ENCODE measurements at regions of chr5 and their contacts with region 1.

Region 1: DNA sequence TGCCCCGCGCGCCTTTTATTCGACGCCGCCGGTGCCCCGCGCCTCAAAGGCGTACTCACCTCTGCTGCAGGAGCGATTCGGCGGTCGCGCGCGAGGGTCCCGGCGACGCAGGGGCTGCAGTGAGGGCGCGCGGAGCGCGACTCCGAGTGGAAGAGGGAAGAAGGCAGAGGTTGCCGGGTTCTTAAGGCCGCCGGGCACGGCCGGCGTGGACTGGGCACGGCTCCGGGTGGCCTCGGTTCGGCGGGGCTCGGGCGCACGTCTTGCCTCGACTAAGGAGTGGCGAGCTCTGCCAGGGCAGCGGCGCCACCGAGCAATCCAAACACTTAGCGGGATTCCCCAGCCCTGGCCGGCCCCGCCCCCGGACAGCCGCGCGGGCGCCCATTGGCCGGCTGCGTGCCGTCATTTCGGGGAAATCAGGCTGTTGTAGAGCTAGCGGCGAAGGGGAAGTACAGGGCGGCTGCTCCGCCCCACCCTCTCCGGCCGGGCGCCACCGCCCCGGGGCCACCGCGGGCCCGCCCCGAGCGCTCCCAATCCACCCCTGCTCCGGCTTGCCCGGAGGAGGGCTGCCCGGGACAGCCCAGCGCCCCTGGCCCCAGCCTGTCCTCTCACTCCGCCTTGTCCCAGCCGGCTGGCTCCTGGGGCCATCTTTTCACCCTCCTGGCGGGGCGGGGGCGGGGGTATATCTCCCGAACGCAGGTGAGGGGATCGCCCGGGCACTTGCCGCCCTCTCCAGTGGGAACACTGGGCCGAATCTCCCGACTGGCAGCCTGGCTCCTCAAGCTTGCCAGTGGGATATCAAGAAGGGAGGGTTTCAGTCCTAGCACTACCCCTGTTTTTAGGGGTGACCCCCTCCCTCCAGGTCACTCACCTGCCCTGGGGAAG is at the start of gene IRF1:
- DNase-seq: peak; percentile 97 to 99 (median 98)
- ATAC-seq: peak; percentile 78 to 80
- H3K4me3 Mint-ChIP-seq: peak within 1 kb of the TSS; percentile 93 to 97 (median 96)
- H3K27ac Mint-ChIP-seq: peak within 1 kb of the TSS; percentile 96 to 98 (median 98)
- H3K4me1 Mint-ChIP-seq: peaks cover 46 to 79% (median 76%) of the 10 kb centered on the region in 4 donors
- H3K27me3 Mint-ChIP-seq: no peaks in the 10 kb centered on the region
- polyA plus RNA-seq, gene IRF1: 108 to 218 (median 141) TPM

Region 2: DNA sequence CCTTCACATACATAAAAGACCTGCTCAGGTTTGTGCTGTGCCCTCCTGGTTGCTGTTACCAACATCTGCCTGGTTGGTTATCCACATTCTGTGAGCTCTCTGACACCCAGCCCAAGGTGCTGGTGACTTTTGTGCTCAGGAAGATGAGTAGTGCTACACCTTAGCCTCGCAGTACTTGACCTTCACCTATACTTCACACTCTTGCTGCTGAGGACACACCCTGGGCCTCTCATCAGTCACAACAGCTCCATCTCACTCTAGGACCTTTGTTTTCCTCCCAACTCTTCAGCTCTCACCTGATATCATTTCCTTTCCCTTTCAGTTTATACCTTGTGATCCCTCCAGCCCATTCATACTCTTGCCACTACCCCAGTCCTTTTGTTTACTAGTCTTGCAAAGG is 132.0 kb before region 1 on chr5:
- POLR2A ChIA-PET with region 1: no interaction called
- DNase-seq: no peak
- ATAC-seq: no peak
- H3K4me3 Mint-ChIP-seq: no peak overlapping the region
- H3K27ac Mint-ChIP-seq: no peak overlapping the region
- H3K4me1 Mint-ChIP-seq: peaks cover 0 to 11% (median 5%) of the 10 kb centered on the region in 4 donors
- H3K27me3 Mint-ChIP-seq: no peaks in the 10 kb centered on the region

Region 3: GRCh38 chr5:132386644-132387286 is 104.0 kb before region 1 on chr5:
- POLR2A ChIA-PET with region 1: interaction called, 96 read pairs
- DNase-seq: peak; percentile 56 to 86 (median 74)
- ATAC-seq: peak; percentile 88 to 92
- H3K4me3 Mint-ChIP-seq: no peak overlapping the region
- H3K27ac Mint-ChIP-seq: peak overlapping the region in 6 of 10 donors; percentile 5 to 81 (median 69)
- H3K4me1 Mint-ChIP-seq: peaks cover 13 to 43% (median 21%) of the 10 kb centered on the region in 4 donors
- H3K27me3 Mint-ChIP-seq: no peaks in the 10 kb centered on the region

Region 4: GRCh38 chr5:132410451-132411381 is 80.0 kb before region 1 on chr5:
- POLR2A ChIA-PET with region 1: interaction called, 178 read pairs
- DNase-seq: peak; percentile 72 to 90 (median 83)
- ATAC-seq: peak; percentile 78 to 79
- H3K4me3 Mint-ChIP-seq: peak overlapping the region; percentile 88 to 99 (median 98)
- H3K27ac Mint-ChIP-seq: peak overlapping the region; percentile 95 to 99 (median 98)
- H3K4me1 Mint-ChIP-seq: peaks cover 36 to 91% (median 79%) of the 10 kb centered on the region in 4 donors
- H3K27me3 Mint-ChIP-seq: no peaks in the 10 kb centered on the region

Region 5: DNA sequence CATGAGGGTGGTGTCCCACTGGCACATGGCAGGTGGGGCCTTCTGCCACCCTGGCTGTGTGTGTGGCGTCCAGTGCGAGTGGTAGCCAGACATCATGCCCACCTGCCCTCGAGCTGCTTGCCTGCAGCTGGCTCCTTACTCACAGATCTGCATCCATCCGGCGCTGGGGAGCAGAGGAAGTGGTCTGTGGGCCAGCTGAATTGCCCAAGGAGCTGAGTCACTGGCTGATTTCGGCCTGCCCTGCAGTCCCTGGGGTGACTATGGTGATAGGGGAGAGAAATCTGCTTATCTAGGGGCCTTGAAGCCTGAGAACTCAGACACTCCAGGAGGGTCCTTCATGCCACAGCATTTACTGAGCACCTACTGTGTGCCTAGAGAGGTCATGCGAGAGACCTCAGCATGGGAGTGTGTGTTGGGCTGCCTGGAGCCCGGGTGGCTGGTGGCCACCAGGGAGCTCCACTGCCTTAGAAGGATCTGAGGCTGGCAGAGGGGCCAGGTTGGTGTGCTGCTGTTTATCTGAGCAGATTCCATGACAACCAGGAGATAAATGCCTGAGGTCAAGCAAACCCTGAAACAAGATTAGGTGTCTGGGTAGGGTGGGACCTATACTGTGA is 64.1 kb before region 1 on chr5:
- POLR2A ChIA-PET with region 1: interaction called, 142 read pairs
- DNase-seq: peak in 5 of 10 donors; percentile 31 to 59 (median 36)
- ATAC-seq: peak; percentile 31 to 40
- H3K4me3 Mint-ChIP-seq: peak overlapping the region; percentile 62 to 90 (median 84)
- H3K27ac Mint-ChIP-seq: peak overlapping the region; percentile 95 to 100 (median 98)
- H3K4me1 Mint-ChIP-seq: peaks cover 51 to 100% (median 98%) of the 10 kb centered on the region in 4 donors
- H3K27me3 Mint-ChIP-seq: no peaks in the 10 kb centered on the region

Region 6: GRCh38 chr5:132437604-132438266 is 53.0 kb before region 1 on chr5:
- POLR2A ChIA-PET with region 1: interaction called, 47 read pairs
- DNase-seq: peak; percentile 29 to 82 (median 52)
- ATAC-seq: peak; percentile 90 to 93
- H3K4me3 Mint-ChIP-seq: peak overlapping the region; percentile 38 to 77 (median 68)
- H3K27ac Mint-ChIP-seq: peak overlapping the region; percentile 84 to 94 (median 90)
- H3K4me1 Mint-ChIP-seq: peaks cover 47 to 95% (median 87%) of the 10 kb centered on the region in 4 donors
- H3K27me3 Mint-ChIP-seq: no peaks in the 10 kb centered on the region

Region 7: DNA sequence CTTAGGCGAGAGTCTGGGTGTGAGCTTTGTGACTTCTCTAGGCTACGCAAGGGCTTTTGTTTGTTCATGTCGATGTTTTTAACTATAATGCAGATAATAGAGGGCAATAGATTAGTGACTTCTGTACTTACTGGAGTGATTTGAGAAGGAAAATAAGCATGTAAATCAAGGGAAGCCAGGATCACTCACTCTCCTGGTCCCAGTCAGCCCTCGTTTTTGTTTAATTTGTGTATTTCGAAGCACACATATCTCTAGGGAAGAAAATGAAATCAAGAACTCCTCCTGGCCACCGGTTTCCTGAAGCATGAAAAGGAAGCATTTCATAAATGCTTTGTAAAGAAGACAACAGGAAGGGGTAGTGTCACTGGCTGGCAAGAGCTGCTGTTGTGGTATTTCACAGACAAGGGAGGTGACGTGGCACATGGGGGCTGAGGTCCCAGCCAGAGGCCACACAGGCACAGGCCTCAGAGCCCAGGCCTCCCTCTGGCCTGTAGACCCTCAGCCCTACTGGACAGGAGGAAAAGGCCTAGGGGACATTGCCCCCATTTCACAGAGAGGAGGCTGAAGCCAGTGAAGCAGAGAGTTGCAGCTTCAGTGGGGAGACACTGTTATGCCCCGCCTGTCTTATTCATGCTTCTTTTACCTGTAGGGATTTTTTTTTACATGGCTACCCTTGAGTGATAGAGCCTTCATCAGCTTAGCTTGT is 34.3 kb before region 1 on chr5:
- POLR2A ChIA-PET with region 1: interaction called, 648 read pairs
- DNase-seq: peak in 8 of 10 donors; percentile 61 to 82 (median 74)
- ATAC-seq: peak; percentile 71 to 79
- H3K4me3 Mint-ChIP-seq: peak overlapping the region; percentile 59 to 85 (median 75)
- H3K27ac Mint-ChIP-seq: peak overlapping the region; percentile 95 to 100 (median 98)
- H3K4me1 Mint-ChIP-seq: peaks cover 53 to 99% (median 92%) of the 10 kb centered on the region in 4 donors
- H3K27me3 Mint-ChIP-seq: no peaks in the 10 kb centered on the region

Region 8: DNA sequence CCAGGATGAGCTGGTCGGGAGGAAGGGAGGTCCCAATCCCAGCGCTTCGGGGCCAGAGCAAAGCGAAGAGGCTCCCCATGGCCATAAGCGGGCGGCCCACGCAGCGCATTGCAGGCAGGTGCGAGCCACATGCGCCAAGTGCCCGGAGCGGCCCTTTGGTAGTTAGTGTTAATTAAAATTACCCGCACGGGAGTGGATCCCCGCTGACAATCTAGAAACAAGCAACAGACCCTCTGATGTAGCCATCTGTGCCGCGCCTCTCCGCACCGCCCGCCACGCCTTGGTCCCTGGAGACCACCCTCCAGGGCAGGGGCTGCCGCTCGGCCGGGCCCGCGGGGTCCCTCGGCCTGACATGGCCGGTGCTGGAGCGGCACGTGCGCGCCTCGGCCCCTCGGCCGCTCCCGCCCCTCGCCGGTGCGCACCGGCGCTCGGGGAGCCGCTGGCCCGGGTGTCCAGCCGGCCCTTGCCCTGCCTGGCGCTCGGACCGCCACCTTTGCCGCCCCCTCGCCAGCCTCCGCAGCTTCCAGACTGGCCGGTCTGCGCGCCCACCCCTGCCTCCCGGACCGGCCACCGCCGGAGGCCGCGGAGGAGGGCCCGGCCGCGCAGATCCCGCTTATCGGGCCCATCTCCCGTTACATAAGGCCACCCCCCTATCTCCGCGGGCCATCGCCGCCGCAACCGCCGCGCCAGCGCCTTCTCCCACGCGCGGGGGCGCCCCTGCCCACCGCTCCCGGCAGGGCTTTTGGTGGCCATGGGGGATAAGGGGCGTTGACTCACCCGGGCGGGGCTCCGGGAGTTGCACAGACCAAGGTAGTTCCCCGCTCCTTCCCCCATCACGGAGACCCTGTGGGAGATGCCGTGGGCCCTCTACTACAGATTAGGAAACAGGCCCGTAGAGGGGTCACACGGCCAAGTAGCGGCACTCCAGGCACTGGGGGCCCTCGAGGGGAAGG is 165.4 kb after region 1 on chr5:
- POLR2A ChIA-PET with region 1: no interaction called
- DNase-seq: peak in 7 of 10 donors; percentile 11 to 33 (median 24)
- ATAC-seq: peak; percentile 46 to 58
- H3K4me3 Mint-ChIP-seq: peak overlapping the region; percentile 15 to 78 (median 63)
- H3K27ac Mint-ChIP-seq: peak overlapping the region in 2 of 10 donors; percentile 69 to 77
- H3K4me1 Mint-ChIP-seq: peaks cover 7 to 14% (median 10%) of the 10 kb centered on the region in 4 donors
- H3K27me3 Mint-ChIP-seq: peaks cover 25 to 56% (median 28%) of the 10 kb centered on the region in 5 donors